Head of caudate nucleus (tissue), 42 donors: ENCODE measurements at regions of chr7 and their contacts with region 1.

Region 1: DNA sequence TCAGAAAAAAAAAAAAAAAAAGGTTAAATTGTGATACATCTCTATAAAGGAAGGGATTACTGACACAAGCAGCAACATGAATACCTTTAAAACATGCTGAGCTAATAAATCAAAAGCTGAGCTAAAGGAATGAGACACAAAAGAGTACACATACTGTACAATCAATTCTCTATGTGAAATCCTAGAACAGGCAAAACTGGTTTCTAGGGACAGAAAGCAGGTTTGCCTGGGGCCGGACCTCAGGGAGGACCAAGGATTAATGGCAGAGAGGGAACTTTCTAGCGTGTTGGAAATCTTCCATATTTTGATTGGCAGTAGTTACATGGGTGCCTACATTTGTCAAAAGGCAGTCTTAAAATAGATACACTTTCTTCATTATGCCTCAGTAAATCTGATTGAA is 52.5 kb downstream of the KLRG2 start:
- DNase-seq: peak in 1 of 42 donors; percentile 34

Region 2: DNA sequence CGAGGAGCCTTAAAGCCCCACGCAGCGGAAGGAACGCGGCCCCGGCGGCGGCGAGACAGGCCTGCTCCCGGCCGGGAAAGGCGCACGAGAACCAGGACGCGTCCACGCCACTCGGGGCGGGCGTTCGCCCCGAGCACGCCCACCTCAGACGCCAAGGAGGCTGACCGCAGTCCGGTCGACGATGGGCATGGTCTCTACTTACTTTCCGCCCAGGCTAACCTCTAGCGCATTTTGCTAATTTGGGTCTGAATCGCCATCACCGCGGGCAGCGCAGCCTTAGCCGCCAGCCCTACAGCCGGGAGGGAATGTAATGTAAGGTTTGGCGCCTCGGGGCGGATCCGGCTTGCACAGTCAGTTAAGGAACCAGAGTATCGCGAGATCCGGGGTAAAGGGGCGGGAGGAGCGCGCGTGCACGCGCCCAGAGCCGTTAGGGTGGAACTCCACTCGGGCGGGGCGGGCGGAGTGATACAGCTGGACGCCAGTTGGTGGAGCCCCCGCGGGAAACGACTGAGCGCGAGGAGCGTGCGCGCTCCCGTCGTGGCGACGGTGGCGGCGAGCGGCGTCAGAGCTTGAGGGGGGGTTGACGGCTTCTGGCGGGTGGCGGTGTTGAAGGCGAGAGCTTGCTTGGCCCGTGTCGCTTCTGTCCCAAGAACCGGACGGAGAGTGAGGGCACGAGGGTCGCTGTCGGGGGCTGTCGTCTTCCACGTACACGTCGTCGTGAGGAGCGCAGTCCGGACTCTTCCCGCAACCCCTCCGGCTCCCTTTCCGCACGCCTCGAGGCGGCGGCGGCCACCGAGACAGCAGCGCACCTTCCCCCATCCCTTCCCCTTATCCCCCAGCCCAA is 71.4 kb before region 1 on chr7 and contains the start of gene LUC7L2:
- intact Hi-C with region 1: loop called (anchors 10 kb)
- DNase-seq: peak; percentile 99 to 100 (median 100)

Region 3: DNA sequence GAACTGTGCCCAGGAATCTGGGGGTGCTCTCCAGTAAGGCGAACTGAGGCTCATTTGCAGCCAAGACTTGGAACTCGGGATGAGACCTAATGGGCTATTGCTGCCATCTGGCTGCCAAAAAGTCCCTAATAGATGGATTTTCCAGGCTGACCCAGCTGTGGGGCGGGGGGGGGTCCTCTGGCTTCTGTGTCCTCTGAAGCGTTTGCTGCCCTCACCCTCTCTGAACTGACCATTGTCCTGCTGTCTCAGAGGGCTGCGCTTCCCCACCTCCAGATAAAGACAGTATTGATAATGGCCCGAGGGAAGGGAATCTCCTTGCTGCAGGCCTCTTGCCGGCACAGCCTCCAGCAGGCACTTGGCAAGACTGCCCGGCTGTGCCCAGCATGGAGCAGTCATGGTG is 139.1 kb after region 1 on chr7:
- intact Hi-C with region 1: loop called (anchors 10 kb)
- DNase-seq: peak; percentile 58 to 93 (median 78)

Region 4: DNA sequence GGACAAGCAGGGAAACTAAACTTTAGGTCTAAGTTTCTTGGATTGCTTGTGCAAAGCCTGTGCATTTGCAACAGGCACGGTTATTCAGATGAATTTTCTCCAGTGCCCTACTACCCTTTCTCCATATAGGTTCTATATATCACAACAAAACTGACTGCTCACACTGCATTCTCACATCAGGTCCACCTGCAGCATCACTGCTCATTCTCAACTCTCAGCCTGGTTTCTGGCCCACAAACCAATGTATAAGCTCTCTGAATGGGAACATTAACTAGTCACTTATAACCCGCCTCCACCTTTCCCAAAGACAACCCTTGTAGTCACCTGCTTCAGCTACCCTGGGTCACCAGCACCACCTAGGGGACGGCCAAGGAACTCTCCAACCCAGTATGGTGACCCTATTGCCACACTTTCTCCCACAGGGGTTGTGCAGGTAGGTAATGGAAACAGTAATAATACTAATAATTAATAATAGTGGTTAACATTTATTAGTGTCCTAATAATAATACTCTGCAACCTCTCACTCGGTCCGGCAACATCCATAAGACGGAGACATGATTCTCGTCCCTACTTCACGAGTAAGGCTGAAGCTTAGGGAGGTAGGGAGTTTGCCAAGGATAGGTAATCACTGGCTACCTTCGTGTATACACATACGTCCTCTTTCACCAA is 189.8 kb after region 1 on chr7:
- intact Hi-C with region 1: no loop called
- DNase-seq: peak in 39 of 42 donors; percentile 28 to 81 (median 56)